PC-3 (cell line): ENCODE measurements at regions of chr1 and their contacts with region 1.

Region 1: DNA sequence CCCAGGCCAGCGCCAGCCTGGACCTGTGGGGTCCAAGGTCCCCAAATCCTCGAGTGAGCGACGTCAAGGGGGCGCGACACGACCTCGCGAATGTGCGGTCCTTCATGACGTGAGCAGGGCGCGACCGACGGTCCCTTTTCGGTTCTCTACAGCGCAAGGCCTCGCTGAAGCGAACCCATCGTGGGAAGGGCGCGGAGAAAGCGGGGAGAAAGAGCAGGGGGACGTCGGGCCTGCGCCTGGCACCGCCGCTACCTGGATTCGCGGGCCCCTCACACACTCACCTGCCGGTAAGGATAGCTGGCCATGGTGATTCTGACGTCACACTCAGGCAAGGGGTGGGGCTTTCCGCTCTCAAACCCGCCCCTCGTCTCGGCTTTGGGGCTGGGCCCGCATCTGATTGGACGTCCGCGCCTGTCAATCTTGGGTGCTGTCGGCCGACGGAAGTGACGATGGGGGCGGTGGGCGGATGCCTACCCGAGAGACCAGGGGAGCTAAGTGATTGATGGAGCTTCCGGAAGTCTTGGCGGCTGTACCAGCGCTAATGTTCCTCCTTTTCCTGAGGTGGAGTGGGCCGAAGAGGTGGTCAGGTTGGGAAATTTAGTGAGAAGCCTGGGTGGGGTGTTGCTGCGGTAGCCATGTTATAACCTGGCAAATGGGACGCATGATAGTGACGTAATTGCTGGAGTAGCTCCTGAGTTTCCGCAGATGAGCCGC is at the start of gene PEF1:
- DNase-seq: peak; percentile 98
- ATAC-seq: peak; percentile 88
- H3K4me3 ChIP-seq: peak within 1 kb of the TSS; percentile 76
- H3K27ac ChIP-seq: peak within 1 kb of the TSS; percentile 83
- H3K4me1 ChIP-seq: peaks cover 12% of the 10 kb centered on the region
- H3K27me3 ChIP-seq: no peaks in the 10 kb centered on the region
- CTCF ChIP-seq: no peak
- total RNA-seq, gene PEF1: 88.4 and 91.6 TPM in 2 replicates

Region 2: DNA sequence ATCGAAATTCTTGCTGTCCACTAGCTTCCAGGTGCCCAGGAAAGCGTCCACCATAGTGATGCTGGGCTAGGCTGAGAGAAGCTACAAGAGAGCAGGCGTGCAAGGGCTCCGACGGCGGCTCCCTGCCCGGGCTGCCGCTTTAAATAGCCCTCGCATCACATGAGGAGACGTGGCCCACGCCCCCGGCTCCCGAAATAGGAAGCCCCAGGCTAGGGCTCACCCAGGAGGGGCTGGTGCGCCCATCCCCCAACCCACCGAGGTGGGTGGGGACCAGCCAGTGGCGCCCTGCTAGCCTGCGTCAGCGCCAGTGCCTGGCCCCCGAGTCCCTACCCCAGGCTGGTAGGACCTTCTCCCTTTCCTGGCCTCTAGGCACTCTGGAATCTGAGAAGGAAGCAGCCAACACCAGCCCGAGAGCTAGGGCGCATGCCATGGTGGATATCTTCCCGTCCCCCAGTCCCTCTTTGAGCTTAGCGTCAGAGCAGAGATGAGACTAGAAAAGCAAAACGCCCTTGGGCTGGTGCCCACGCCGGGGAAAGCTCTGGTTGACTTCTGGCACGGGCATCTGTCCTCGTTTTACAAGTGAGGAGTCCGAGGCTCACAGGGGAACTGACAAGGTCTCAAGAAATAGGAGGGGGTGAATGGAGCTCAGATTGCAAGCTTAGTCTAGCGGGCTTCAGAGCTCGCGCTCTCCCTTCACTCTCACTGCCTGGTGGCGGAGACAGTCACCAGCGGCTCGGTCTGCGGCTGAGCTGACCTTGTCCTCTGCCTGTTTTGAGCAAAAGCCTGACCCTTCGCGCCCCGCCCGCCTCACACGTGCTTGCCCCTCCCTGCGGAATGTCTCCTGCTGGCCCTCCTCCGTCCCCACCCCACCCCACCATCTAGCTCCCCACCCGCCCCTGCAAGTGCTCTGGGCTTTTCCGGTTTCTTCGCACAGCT is 271.5 kb before region 1 on chr1 and contains the start of gene FABP3:
- CTCF ChIA-PET with region 1: no interaction called
- POLR2A ChIA-PET with region 1: interaction called, 17 read pairs
- intact Hi-C with region 1: no loop called
- DNase-seq: peak; percentile 46
- ATAC-seq: peak; percentile 65
- H3K4me3 ChIP-seq: peak within 1 kb of the TSS; percentile 60
- H3K27ac ChIP-seq: peak within 1 kb of the TSS; percentile 6; the same call in 1 of the 2 replicates
- H3K4me1 ChIP-seq: peaks cover 38% of the 10 kb centered on the region
- H3K27me3 ChIP-seq: no peaks in the 10 kb centered on the region
- CTCF ChIP-seq: no peak
- total RNA-seq, gene FABP3: 0.40 TPM in 1 of 2 replicates, not detected in the other

Region 3: DNA sequence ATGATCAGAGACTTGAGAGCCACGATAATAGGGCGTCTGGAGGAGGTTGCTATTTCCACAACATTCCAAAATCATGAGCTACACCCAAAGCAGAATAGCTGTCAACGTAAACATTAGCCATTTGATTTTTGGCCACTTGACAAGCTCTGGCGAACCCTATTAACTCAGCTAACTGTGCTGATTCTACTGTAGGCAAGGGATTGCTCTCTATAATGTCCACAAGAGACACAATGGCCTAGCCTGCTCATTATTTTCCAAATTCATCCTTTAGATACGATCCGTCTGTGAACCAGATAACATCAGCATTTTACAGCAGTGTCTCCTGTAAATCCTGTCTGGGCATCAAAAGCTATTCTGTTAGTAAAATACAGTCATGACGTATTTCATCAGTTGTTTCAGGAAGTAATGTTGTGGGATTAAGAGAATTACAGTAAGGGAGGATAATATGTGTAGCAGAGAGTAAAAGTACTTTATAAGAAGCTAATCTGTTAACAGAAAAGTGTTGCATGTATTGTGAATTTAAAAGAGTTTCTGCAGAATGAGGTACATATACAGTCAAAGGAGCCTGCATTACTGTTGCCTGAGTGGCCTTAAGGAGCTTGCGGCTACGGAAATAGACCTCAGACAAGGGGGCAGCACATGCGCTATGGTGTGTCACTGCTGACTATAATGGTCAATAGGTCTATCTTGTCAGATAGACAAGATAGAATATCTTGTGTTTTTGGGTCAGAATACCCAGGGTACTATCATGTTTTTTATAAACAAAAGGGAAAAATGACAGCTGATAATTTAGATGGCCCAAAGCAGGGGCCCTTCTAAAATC is 113.3 kb before region 1 on chr1:
- CTCF ChIA-PET with region 1: no interaction called
- POLR2A ChIA-PET with region 1: interaction called, 11 read pairs
- intact Hi-C with region 1: no loop called
- DNase-seq: peak; percentile 83
- ATAC-seq: peak; percentile 96
- H3K4me3 ChIP-seq: no peak overlapping the region
- H3K27ac ChIP-seq: no peak overlapping the region
- H3K4me1 ChIP-seq: peaks cover 18% of the 10 kb centered on the region
- H3K27me3 ChIP-seq: no peaks in the 10 kb centered on the region
- CTCF ChIP-seq: no peak; the same call in 1 of the 2 replicates

Region 4: DNA sequence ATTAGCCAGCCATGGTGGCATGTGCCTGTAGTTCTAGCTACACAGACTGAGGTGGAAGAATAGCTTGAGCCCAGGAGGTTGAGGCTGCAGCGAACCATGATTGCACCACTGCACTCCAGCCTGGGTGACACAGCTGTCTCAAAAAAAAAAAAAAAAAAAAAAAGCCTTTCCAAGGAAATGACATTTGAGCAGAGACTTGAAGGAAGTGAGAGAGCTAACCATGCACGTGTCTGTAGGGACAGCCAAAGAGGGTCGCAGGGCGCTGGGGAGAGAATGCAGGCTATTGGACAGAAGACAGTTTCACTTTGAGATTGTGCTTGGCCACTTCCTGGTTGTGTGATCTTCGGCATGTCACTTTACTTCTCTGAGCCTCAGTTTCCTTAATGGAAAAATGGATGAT is 20.4 kb before region 1 on chr1:
- CTCF ChIA-PET with region 1: no interaction called
- POLR2A ChIA-PET with region 1: no interaction called
- intact Hi-C with region 1: no loop called
- DNase-seq: no peak
- ATAC-seq: no peak
- H3K4me3 ChIP-seq: no peak overlapping the region
- H3K27ac ChIP-seq: no peak overlapping the region
- H3K4me1 ChIP-seq: no peaks in the 10 kb centered on the region
- H3K27me3 ChIP-seq: no peaks in the 10 kb centered on the region
- CTCF ChIP-seq: no peak